ENCODE measurements at regions of chr7 and their contacts with region 1.

Region 1: DNA sequence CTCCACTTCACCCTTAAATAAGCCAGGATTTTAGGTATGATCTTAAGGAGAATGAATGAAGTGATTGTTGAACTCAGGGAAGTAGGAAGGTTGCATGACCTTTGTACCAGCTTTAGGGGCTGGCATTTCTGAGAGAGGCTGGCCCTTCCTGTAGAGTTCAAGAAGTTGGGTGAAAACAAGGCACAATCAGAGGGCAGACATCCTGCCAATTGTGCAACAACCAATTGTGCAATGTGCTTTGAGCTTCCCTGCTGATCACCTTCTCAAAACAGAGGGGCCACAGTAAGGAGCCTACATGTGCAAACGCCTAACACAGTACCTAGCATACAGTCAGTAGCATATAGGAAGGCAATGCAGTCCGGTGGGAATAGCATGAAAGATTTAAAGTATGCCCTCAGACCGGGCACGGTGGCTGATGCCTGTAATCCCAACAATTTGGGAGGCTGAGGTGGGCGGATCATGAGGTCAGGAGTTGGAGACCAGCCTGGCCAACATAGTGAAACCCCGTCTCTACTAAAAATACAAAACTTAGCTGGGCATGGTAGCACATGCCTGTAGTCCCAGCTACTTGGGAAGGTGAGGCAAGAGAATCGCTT is 5.4 kb downstream of the CPVL start:
- DNase-seq: no peak
- CTCF ChIP-seq: no peak

Region 2: DNA sequence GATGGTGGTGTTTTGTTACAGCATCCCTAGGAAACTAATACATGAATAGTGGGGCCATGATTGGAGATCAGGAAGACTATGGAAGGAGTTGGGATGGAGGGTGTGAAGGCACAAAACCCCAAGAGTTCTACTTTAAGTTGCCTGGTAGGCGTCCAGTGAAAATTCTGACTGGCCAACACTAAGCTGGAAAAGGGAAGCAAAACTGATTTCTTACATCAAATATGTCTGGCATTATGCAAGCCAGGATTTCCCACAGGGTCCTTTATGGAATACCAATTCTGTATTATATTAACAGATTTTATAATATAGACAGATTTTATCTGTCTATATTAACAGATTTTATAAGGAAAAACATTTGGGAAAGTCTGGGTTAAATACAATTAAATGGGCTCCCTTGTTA is 10.9 kb before region 1 on chr7:
- CTCF ChIA-PET with region 1: interaction called, 13 read pairs
- POLR2A ChIA-PET with region 1: no interaction called
- DNase-seq: no peak
- CTCF ChIP-seq: no peak

Region 3: GRCh38 chr7:29177963-29178600 is 37.1 kb after region 1 on chr7:
- CTCF ChIA-PET with region 1: no interaction called
- POLR2A ChIA-PET with region 1: no interaction called
- DNase-seq: no peak
- CTCF ChIP-seq: no peak

Region 4: DNA sequence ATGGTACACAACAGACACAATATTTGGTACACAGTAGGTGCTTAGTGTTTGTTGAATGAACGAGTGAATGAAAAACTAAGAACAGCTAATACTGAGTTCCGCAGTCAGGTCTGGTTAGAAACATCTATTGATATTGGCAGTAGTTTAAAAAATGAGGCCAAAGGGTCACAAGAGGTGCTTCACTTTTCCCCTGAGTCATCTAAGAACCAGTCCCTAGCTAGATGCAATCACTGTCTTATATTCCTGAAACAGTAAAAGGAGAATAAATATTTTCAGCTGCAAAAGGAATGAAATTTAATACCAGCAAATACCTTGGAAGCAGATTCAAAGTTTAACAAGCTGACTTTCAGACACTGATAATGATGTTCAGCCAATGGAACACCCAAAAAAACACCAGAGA is 794.1 kb after region 1 on chr7:
- CTCF ChIA-PET with region 1: no interaction called
- POLR2A ChIA-PET with region 1: no interaction called
- DNase-seq: no peak
- CTCF ChIP-seq: no peak